ENCODE measurements at regions of chr12 and their contacts with region 1.

Region 1: GRCh38 chr12:41367726-41368405 is 179.7 kb downstream of the PDZRN4 start:
- DNase-seq: no peak
- H3K4me3 ChIP-seq: no peak overlapping the region
- H3K4me3 Mint-ChIP-seq: no peak overlapping the region
- H3K27ac Mint-ChIP-seq: no peak overlapping the region
- H3K4me1 ChIP-seq: no peaks in the 10 kb centered on the region
- H3K4me1 Mint-ChIP-seq: no peaks in the 10 kb centered on the region
- H3K27me3 ChIP-seq: no peaks in the 10 kb centered on the region
- H3K27me3 Mint-ChIP-seq: no peaks in the 10 kb centered on the region
- CTCF ChIP-seq: no peak

Region 2: DNA sequence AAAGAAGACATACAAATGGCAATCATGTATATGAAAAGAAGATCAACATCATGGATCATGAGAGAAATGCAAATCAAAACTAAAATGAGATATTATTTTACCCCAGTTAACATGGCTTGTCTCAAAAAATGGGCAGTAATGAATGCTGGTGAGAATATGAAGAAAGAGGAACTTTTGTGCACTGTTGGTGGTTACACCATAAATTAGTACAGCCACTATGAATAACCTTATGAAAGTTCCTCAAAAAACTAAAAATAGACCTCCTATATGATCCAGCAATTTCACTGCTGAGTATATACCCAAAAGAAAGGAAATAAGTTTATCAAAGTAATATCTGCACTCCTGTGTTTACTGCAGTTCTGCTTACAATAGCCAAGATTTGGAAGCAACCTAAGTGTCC is 28.1 kb before region 1 on chr12:
- CTCF ChIA-PET with region 1: no interaction called
- POLR2A ChIA-PET with region 1: no interaction called
- intact Hi-C with region 1: no loop called
- DNase-seq: no peak
- H3K4me3 ChIP-seq: no peak overlapping the region
- H3K4me3 Mint-ChIP-seq: no peak overlapping the region
- H3K27ac Mint-ChIP-seq: no peak overlapping the region
- H3K4me1 ChIP-seq: no peaks in the 10 kb centered on the region
- H3K4me1 Mint-ChIP-seq: no peaks in the 10 kb centered on the region
- H3K27me3 ChIP-seq: no peaks in the 10 kb centered on the region
- H3K27me3 Mint-ChIP-seq: no peaks in the 10 kb centered on the region
- CTCF ChIP-seq: no peak

Region 3: GRCh38 chr12:41486718-41487117 is 118.9 kb after region 1 on chr12:
- CTCF ChIA-PET with region 1: no interaction called
- POLR2A ChIA-PET with region 1: no interaction called
- intact Hi-C with region 1: no loop called
- DNase-seq: no peak
- H3K4me3 ChIP-seq: no peak overlapping the region
- H3K4me3 Mint-ChIP-seq: no peak overlapping the region
- H3K27ac Mint-ChIP-seq: no peak overlapping the region
- H3K4me1 ChIP-seq: no peaks in the 10 kb centered on the region
- H3K4me1 Mint-ChIP-seq: no peaks in the 10 kb centered on the region
- H3K27me3 ChIP-seq: no peaks in the 10 kb centered on the region
- H3K27me3 Mint-ChIP-seq: peaks cover 4% of the 10 kb centered on the region
- CTCF ChIP-seq: no peak

Region 4: DNA sequence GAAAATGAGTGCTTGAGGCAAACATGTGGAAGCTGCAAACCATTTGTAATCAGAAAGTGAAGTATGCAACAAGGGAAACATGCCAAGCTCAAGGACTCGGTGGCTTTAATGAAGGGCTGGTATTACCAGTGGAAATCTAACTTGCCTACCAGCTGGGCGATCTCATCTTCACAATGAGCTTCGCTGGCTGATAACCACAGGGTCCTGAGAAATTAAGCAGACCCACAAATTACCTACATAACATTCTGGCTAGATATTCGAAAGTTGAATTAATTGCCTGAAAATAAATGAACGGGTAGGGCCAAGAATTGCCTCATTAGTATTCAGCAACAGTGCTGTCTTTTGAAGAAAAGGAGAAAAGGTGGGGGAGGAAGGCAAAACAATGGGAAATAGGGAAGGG is 259.6 kb after region 1 on chr12:
- CTCF ChIA-PET with region 1: no interaction called
- POLR2A ChIA-PET with region 1: no interaction called
- intact Hi-C with region 1: no loop called
- DNase-seq: no peak
- H3K4me3 ChIP-seq: no peak overlapping the region
- H3K4me3 Mint-ChIP-seq: no peak overlapping the region
- H3K27ac Mint-ChIP-seq: no peak overlapping the region
- H3K4me1 ChIP-seq: no peaks in the 10 kb centered on the region
- H3K4me1 Mint-ChIP-seq: no peaks in the 10 kb centered on the region
- H3K27me3 ChIP-seq: no peaks in the 10 kb centered on the region
- H3K27me3 Mint-ChIP-seq: no peaks in the 10 kb centered on the region
- CTCF ChIP-seq: no peak

Region 5: DNA sequence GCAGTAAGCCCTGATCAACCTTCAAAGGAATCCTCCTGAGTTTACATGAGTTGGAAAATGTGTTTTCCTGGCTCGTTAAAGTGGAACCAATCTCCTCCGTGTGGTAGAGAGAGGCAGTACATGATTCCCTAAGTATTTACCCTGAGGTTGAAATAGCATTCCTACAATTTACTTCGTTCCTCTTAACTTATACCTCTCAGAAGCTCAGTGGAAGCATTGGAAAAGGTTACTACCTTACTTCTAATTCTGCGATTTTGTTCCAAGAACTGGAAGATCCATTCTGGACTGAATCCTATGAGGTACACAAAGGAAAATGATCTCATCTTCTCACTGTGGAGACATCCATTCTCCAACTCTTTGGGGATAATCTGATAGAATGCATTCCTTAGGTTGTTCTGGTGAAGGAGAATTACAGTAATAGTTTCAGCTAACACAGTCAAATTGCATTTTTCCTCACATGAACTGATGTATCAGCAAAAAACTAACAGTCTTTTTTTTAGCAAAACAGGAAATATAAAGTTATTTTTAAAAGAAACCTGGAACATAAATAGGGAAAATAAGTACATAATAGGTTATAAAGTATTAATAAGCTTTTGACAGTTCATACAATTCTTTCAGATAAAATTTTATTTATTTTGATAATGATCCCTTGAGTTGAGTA is 295.9 kb after region 1 on chr12:
- CTCF ChIA-PET with region 1: no interaction called
- POLR2A ChIA-PET with region 1: no interaction called
- intact Hi-C with region 1: loop called (anchors 1 kb)
- DNase-seq: peak in 1 of 2 experiments; percentile 25
- H3K4me3 ChIP-seq: no peak overlapping the region
- H3K4me3 Mint-ChIP-seq: no peak overlapping the region
- H3K27ac Mint-ChIP-seq: no peak overlapping the region
- H3K4me1 ChIP-seq: no peaks in the 10 kb centered on the region
- H3K4me1 Mint-ChIP-seq: no peaks in the 10 kb centered on the region
- H3K27me3 ChIP-seq: no peaks in the 10 kb centered on the region
- H3K27me3 Mint-ChIP-seq: no peaks in the 10 kb centered on the region
- CTCF ChIP-seq: peak; percentile 57 to 69